ENCODE measurements at regions of chr1 and their contacts with region 1.

Region 1: DNA sequence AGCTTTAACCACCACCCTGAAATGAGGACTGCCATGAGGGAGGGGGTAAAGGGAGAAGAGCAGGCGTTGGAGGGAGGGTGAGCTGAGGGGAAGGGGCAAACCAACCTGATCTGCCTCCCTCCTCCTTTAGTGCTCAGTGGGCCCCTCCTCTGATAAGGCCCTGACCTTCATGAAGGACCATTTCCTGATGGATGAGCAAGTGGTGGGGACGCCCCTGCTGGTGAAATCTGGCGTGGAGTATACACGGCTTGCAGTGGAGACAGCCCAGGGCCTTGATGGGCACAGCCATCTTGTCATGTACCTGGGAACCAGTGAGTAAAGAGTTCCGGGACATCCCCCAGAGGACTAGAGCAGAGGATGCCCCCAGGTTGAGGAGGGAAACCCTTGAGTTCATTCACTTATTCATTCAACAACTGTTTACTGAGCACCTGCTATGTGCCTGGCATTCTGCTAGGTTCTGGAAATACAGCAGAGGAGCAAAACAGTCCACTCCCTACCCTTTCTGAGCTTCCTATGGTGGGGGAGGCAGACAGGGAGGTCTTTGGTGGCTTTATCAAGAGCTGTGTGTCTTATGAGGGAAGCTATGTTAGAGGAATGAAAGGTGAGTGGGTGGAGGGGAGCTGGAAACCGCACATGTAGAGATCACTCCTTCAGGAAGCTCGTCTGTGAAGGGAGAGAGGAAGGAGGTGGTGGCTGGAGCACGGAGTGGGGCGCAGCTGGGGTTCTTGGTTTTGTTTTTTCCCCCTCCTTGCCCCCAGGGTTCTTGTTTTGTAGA is 19.5 kb downstream of the SEMA4A start:
- DNase-seq: peak; percentile 40 to 73 (median 53)
- ATAC-seq: peak; percentile 79
- H3K4me3 ChIP-seq: no peak overlapping the region
- H3K27ac ChIP-seq: no peak overlapping the region
- H3K4me1 ChIP-seq: peaks cover 7 to 17% of the 10 kb centered on the region in 2 experiments; a peak in 4 of 5 replicates
- H3K27me3 ChIP-seq: no peaks in the 10 kb centered on the region
- CTCF ChIP-seq: peak; percentile 24 to 46 (median 28); a peak in 2 of 6 replicates
- EP300 ChIP-seq: no peak
- POLR2A ChIP-seq: no peak
- RAD21 ChIP-seq: no peak

Region 2: DNA sequence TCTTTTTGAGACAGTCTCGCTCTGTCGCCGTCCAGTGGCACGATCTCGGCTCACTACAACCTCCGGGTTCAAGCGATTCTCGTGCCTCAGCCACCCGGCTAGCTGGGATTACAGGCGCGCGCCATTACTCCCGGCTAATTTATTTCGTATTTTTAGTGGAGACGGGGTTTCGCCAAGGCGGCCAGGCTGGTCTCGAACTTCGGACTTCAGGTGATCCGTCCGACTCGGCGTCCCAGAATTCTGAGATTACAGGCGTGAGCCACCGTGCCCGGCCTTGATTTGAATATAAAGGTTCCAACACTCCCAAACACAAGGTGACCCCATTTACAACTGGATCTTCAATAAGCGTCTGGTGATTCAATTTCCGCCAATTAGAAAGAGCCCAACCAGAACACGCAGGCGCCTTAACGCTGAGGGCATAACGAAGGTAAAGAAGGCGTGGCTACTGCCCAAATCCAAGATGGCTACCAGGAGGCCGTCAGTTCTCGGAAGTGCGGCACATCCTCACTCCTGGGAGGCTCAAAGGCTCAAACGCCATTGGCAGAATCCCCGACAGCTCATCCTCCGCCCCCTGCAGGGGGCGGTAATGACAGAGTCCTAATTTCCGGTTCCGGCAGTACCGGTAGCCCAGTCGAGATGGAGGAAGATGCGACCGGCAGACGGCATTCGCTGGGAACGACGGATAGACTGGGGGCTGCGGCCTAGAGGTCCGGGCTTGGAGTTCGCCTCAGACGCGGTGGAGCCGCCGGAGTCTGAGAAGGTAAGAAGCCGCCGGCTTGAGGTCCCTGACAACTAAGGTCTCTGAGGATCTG is 20.8 kb after region 1 on chr1 and contains the start of gene SLC25A44:
- CTCF ChIA-PET with region 1: no interaction called
- POLR2A ChIA-PET with region 1: interaction called, 11 read pairs
- in situ Hi-C with region 1: no loop called
- intact Hi-C with region 1: no loop called
- DNase-seq: peak; percentile 95 to 99 (median 96)
- ATAC-seq: peak; percentile 99
- H3K4me3 ChIP-seq: peak within 1 kb of the TSS; percentile 71
- H3K27ac ChIP-seq: peak within 1 kb of the TSS; percentile 82
- H3K4me1 ChIP-seq: peaks cover 6 to 12% of the 10 kb centered on the region in 2 experiments
- H3K27me3 ChIP-seq: no peaks in the 10 kb centered on the region
- CTCF ChIP-seq: peak; percentile 61 to 68 (median 61)
- EP300 ChIP-seq: 0 out of 2 replicates have a peak, but pooled peaks have one; percentile 12
- POLR2A ChIP-seq: peak; percentile 90
- RAD21 ChIP-seq: no peak
- polyA plus RNA-seq, gene SLC25A44: 4.4 to 7.5 TPM

Measured in K562 (cell line).